Caco-2 (cell line): ENCODE measurements at regions of chr2 and their contacts with region 1.

Region 1: DNA sequence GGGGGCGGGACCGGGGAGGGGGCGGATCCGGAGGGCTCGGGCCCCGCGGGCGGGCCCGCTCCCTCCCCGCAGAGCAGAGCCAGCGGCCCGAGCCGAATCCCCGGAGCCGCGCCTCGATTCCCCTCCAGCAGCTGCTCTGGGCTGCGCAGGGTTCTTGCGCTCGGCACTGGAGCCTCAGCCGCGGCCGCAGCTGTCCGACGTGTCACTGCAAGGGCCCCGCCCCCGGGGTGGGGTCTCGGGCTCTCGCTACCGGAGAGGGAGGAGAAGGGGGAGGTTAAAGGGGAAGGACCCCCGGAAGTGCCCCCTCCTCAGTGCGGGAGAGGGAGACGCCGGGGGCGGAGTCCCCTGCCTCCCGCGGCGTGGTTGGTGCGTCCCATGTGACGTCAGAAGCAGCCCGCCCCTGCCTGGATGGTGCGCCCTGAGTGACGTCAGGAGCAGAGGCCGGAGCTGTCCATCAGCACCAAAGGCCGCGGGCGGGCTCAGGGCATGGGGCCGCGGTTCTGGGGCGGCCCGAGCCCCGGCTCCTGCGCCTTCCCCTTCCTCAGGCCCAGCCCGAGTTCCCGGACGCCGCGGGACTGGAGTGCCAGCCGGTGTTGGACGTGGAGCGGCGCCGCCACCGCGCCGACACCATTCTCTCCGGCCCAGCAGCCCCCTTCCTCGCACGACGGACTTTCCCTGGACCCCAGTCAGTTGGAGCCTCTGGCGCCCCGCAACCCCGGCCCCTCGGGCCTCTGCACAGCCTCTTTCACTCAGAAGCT is at the starts of genes CHPF and TMEM198:
- DNase-seq: peak; percentile 99
- H3K4me3 ChIP-seq: peak within 1 kb of the TSS; percentile 92
- H3K4me3 Mint-ChIP-seq: peak within 1 kb of the TSS; percentile 92
- H3K27ac Mint-ChIP-seq: peak within 1 kb of the TSS; percentile 87
- H3K4me1 ChIP-seq: peaks cover 19% of the 10 kb centered on the region
- H3K4me1 Mint-ChIP-seq: peaks cover 7% of the 10 kb centered on the region
- H3K27me3 ChIP-seq: no peaks in the 10 kb centered on the region
- H3K27me3 Mint-ChIP-seq: no peaks in the 10 kb centered on the region
- CTCF ChIP-seq: no peak
- total RNA-seq, gene CHPF: 26.4 and 27.3 TPM in 2 replicates
- total RNA-seq, gene TMEM198: 8.5 and 9.1 TPM in 2 replicates

Region 2: DNA sequence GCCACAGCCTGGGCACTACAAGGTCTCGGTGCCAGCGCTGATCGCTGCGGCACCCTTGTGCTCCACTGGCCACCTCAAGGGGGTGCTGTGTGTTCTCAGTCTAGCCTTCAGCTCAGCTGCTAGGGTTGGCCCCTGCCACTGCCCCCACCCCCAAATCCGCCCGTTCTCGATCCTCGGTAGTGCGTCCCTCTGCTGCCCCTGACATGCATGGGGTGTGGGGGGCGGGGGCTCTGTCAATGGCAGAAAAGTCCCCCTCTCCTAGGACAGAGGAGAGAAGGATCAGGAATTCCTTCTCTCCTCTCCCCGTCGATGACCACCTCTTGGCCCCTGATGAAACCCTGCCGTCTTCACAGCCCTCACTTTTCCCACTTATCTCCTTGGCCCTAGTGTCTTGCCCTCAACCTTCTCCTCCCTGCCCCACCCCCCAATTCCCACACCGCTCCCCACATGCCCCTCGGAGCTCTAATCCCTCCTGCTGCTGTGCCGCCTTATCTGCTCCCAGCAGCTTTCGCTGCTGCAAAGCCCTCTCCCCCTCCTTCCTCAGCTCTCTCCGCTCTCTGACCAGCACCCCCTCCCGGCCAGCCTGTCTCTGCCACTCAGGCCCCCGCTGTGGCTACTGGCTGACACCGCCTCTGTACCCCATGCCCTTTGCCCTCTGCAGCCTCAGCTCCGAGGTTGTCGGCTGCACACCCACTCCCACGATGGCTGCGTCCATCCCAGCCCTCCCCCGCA is 33.8 kb before region 1 on chr2:
- CTCF ChIA-PET with region 1: interaction called, 16 read pairs
- POLR2A ChIA-PET with region 1: no interaction called
- intact Hi-C with region 1: no loop called
- DNase-seq: peak; percentile 80 to 81
- H3K4me3 ChIP-seq: peak overlapping the region; percentile 64
- H3K4me3 Mint-ChIP-seq: peak overlapping the region; percentile 80
- H3K27ac Mint-ChIP-seq: no peak overlapping the region
- H3K4me1 ChIP-seq: peaks cover 12% of the 10 kb centered on the region
- H3K4me1 Mint-ChIP-seq: peaks cover 18% of the 10 kb centered on the region
- H3K27me3 ChIP-seq: peaks cover 5% of the 10 kb centered on the region; the same call in 1 of the 2 replicates
- H3K27me3 Mint-ChIP-seq: peaks cover 20% of the 10 kb centered on the region
- CTCF ChIP-seq: peak; percentile 68 to 90

Region 3: DNA sequence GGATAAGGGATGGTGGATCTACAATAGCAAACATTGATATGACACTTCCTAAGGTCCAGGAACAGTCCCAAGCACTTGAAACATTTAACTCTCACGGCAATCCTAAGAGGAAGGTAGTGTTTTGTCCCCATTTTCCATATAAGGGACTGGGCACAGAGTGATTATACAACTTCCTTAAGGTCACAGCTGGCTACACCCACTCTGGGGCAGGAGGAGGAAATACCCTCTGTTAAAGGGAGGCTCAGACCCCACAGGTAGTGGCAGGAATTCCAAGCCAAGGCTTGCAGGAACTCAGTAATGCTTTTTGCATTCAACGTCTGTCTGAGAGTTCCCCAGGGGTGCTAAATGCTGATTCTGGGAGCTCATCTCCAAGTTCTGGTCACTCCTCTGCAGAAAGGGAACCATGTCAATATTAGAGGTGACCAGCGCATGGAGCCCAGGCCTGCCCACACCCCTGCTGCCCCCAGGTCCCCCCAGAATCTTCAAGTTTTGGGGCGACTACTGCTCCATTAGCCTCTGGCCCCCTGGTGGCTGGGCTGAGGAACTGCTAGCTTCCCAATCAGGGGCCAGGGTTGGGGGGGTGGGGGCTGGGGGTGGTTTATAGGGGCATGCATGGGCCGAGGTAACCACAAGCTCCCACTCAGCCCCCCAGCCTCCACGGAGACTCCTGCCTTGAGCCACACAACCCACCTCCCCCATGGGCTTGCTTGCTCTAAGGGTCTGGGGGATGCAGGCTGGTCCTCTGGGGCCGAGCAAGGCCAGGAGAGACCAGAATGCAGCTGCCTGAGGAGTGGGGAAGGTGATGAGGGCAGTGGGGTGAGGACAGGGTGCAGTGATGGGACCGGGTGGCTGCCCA is 16.5 kb after region 1 on chr2:
- CTCF ChIA-PET with region 1: interaction called, 16 read pairs
- POLR2A ChIA-PET with region 1: no interaction called
- intact Hi-C with region 1: no loop called
- DNase-seq: peak in 1 of 2 experiments; percentile 33
- H3K4me3 ChIP-seq: no peak overlapping the region
- H3K4me3 Mint-ChIP-seq: no peak overlapping the region
- H3K27ac Mint-ChIP-seq: peak overlapping the region; percentile 64
- H3K4me1 ChIP-seq: peaks cover 25% of the 10 kb centered on the region
- H3K4me1 Mint-ChIP-seq: peaks cover 15% of the 10 kb centered on the region
- H3K27me3 ChIP-seq: no peaks in the 10 kb centered on the region; the same call in 1 of the 2 replicates
- H3K27me3 Mint-ChIP-seq: no peaks in the 10 kb centered on the region
- CTCF ChIP-seq: peak; percentile 75 to 91

Region 4: GRCh38 chr2:219571311-219572236 is 27.8 kb after region 1 on chr2 and contains the start of gene OBSL1:
- CTCF ChIA-PET with region 1: interaction called, 3 read pairs
- POLR2A ChIA-PET with region 1: interaction called, 4 read pairs
- intact Hi-C with region 1: loop called (anchors 2 kb)
- DNase-seq: peak; percentile 90 to 92
- H3K4me3 ChIP-seq: peak within 1 kb of the TSS; percentile 75
- H3K4me3 Mint-ChIP-seq: peak within 1 kb of the TSS; percentile 62
- H3K27ac Mint-ChIP-seq: peak within 1 kb of the TSS; percentile 42
- H3K4me1 ChIP-seq: peaks cover 22% of the 10 kb centered on the region
- H3K4me1 Mint-ChIP-seq: peaks cover 17% of the 10 kb centered on the region
- H3K27me3 ChIP-seq: no peaks in the 10 kb centered on the region
- H3K27me3 Mint-ChIP-seq: no peaks in the 10 kb centered on the region
- CTCF ChIP-seq: no peak
- total RNA-seq, gene OBSL1: 56.2 and 57.6 TPM in 2 replicates

Region 5: GRCh38 chr2:219597552-219598307 is 54.0 kb after region 1 on chr2 and contains the start of gene STK11IP:
- CTCF ChIA-PET with region 1: interaction called, 5 read pairs
- POLR2A ChIA-PET with region 1: interaction called, 3 read pairs
- intact Hi-C with region 1: loop called (anchors 1 kb)
- DNase-seq: peak; percentile 97 to 99
- H3K4me3 ChIP-seq: peak within 1 kb of the TSS; percentile 72
- H3K4me3 Mint-ChIP-seq: peak within 1 kb of the TSS; percentile 96
- H3K27ac Mint-ChIP-seq: peak within 1 kb of the TSS; percentile 98
- H3K4me1 ChIP-seq: peaks cover 23% of the 10 kb centered on the region
- H3K4me1 Mint-ChIP-seq: no peaks in the 10 kb centered on the region
- H3K27me3 ChIP-seq: no peaks in the 10 kb centered on the region
- H3K27me3 Mint-ChIP-seq: no peaks in the 10 kb centered on the region
- CTCF ChIP-seq: no peak
- total RNA-seq, gene STK11IP: 21.7 and 24.3 TPM in 2 replicates

Region 6: GRCh38 chr2:219689676-219690628 is 146.2 kb after region 1 on chr2:
- CTCF ChIA-PET with region 1: no interaction called
- POLR2A ChIA-PET with region 1: no interaction called
- intact Hi-C with region 1: loop called (anchors 1 kb)
- DNase-seq: peak in 1 of 2 experiments; percentile 71
- H3K4me3 ChIP-seq: no peak overlapping the region
- H3K4me3 Mint-ChIP-seq: no peak overlapping the region
- H3K27ac Mint-ChIP-seq: no peak overlapping the region
- H3K4me1 ChIP-seq: peaks cover 48% of the 10 kb centered on the region
- H3K4me1 Mint-ChIP-seq: peaks cover 21% of the 10 kb centered on the region
- H3K27me3 ChIP-seq: no peaks in the 10 kb centered on the region
- H3K27me3 Mint-ChIP-seq: peaks cover 7% of the 10 kb centered on the region
- CTCF ChIP-seq: peak; percentile 66 to 86